ENCODE measurements at regions of chr19 and their contacts with region 1.

Region 1: GRCh38 chr19:2750808-2751443 is 11.1 kb upstream of the SLC39A3 start:
- DNase-seq: no peak
- ATAC-seq: no peak
- H3K4me3 ChIP-seq: no peak overlapping the region
- H3K27ac ChIP-seq: no peak overlapping the region
- H3K4me1 ChIP-seq: no peaks in the 10 kb centered on the region
- H3K27me3 ChIP-seq: no peaks in the 10 kb centered on the region

Region 2: DNA sequence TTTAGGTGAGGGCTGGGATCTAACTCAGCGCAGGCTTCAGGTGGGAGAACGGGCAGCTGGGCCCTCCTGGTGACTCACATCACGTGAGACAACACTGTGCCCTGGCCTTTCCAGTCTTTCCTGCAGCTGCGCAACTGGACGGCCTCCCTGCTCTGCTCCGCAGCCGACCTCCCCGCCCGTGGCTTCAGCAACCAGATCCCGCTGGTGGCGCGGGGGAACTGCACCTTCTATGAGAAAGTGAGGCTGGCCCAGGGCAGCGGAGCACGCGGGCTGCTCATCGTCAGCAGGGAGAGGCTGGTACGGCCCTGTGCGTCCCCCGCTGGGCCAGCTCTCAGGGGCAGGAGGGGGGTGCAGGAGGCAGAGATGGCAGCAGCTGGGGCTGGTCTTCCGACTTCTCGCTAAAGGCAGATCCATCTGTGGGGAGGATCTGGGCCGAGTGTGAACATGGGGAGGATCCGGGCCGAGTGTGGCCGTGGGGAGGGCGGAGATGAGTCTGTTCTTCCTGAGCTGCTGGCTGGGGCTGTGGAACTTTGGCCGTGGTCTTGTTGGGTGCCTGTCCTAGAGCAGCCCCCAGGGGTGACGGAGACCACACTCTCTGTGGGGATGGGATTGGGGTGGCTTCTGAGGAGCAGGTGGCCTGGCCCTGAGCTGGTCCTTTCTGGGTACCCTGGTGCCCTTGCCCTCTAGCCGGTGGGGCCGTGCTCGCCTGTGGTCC is 413.4 kb before region 1 on chr19:
- intact Hi-C with region 1: no loop called
- DNase-seq: peak in 2 of 3 donors; percentile 54 to 69
- ATAC-seq: no peak
- H3K4me3 ChIP-seq: no peak overlapping the region
- H3K27ac ChIP-seq: no peak overlapping the region
- H3K4me1 ChIP-seq: no peaks in the 10 kb centered on the region
- H3K27me3 ChIP-seq: no peaks in the 10 kb centered on the region

Region 3: GRCh38 chr19:2648528-2648937 is 102.4 kb before region 1 on chr19:
- intact Hi-C with region 1: loop called (anchors 2 to 10 kb)
- DNase-seq: peak; percentile 69 to 86 (median 86)
- ATAC-seq: peak; percentile 82 to 85
- H3K4me3 ChIP-seq: no peak overlapping the region
- H3K27ac ChIP-seq: no peak overlapping the region
- H3K4me1 ChIP-seq: no peaks in the 10 kb centered on the region
- H3K27me3 ChIP-seq: no peaks in the 10 kb centered on the region

Region 4: DNA sequence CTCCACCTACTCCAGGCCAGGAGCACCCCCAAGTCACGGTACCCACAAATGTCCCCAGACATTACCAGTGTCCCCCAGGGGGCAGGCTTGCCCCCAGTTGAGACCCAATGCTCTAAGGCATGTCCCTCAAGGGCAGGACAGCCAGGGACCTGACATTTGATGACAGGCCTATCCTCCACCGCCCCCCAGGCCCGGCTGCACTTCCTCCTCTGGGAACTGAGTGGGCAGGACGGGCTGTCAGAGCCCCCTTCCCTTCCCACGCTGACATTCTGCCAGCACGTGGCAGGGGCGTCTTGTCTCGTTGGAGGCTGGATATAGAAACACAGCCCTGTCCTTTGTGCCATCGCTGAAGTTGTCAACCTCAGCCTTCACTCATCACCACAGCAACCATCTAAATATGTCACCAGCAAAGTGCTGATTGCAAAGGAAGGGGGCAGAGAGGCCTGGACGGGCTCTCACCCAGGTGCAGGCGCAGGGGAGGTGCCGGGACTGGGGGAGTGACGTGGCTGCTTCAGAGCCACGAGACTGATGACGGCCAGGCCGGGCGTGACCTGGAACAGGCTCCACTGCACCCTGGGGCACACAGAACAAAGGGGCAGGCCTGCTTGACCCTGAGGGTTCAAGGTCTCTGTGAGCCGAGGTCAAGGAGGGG is 86.9 kb before region 1 on chr19:
- intact Hi-C with region 1: loop called in 2 of 4 experiments (anchors 5 to 10 kb)
- DNase-seq: peak; percentile 70 to 90 (median 85)
- ATAC-seq: peak; percentile 91 to 93
- H3K4me3 ChIP-seq: no peak overlapping the region
- H3K27ac ChIP-seq: peak overlapping the region; percentile 56
- H3K4me1 ChIP-seq: no peaks in the 10 kb centered on the region
- H3K27me3 ChIP-seq: no peaks in the 10 kb centered on the region

Region 5: DNA sequence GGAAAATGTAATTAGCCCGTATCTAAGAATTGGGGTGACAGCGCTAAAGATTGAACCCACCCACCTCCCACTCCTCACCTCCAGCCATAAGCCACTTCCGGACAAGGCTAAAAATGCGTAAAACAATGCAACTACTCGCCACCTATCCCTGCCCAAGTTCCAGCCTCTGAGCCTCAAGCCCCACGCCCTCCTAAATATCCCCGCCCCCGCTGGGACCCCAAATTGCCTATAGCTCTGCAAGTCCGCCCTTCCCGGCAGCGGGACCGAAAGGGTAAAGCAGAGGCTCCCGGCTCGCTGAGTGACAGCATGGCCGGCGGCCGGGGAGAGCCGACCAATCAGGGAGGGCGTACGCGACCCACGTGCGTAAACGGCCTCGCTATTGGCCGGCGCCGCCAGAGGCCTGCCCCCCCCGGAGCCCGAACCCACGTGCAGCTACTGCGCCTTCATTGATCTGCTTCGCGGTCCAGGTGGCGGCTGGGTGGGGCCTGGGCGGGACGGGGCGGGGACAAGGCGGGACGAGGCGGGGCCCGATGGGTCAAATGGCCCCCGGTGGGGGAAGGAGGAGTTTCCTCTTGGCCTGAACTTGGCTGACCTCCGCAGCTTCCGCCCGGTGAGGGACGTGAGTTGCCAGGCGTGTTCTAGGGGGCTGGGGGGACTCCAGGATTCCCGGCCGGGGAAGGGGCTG is 226.2 kb after region 1 on chr19 and contains the start of gene TLE6:
- intact Hi-C with region 1: no loop called
- DNase-seq: peak; percentile 98 to 99 (median 99)
- ATAC-seq: peak; percentile 93
- H3K4me3 ChIP-seq: peak within 1 kb of the TSS; percentile 28
- H3K27ac ChIP-seq: peak within 1 kb of the TSS; percentile 66
- H3K4me1 ChIP-seq: peaks cover 2% of the 10 kb centered on the region
- H3K27me3 ChIP-seq: no peaks in the 10 kb centered on the region
- total RNA-seq, gene TLE6: 0.28 to 2.2 (median 1.2) TPM